K562 (cell line): ENCODE measurements at regions of chr6 and their contacts with region 1.

Region 1: DNA sequence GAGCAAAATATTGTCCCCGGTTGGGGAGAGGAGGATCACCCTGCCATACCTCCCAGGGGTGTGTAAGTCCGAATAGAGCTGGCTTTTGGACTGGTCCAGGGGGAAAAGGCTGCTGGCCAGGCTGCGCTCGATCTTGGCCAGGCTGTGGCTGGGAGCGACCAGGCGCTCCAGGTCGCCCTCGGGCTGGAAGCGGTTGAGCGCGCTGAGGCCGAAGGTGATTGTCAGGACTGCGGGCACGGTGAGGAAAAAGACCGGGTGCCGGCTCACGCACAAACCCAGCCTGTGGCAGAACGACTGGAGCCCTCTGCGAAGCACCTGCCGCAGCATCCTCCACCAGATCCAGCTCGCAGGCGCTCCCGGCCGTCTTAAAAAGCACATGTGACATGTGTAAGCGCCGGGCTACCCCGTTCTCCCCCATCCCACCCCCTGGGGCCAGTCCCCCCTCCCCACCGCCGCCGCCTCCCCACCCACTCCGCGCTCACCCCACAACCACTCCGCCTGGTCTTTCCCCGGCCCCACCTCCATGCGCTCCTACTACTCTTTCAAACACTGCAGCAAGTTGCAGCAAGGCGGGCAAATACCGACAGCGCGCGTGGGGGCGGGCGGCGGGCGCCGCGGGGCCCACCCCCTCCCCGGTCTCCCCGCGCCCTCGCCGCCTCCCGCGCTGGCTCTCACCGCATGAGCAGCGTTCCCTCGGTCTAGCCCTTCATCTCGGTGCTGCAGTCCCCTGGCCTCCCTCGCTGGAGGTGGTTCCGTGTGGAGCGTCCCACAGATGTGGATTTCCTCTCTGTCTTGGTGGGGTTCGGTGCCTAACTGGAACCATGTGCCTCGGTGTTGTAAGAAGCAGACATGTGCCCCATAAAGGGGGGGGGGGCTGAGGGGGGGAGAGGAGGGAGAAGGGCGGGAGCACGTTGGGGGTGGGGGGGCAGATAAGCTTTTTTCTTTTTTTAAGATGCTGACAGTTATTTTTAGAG is 42.4 kb downstream of the PTCHD4 start:
- DNase-seq: no peak
- ATAC-seq: no peak
- H3K4me3 ChIP-seq: no peak overlapping the region
- H3K27ac ChIP-seq: no peak overlapping the region
- H3K4me1 ChIP-seq: no peaks in the 10 kb centered on the region
- H3K27me3 ChIP-seq: no peaks in the 10 kb centered on the region
- CTCF ChIP-seq: no peak
- EP300 ChIP-seq: no peak
- POLR2A ChIP-seq: no peak
- RAD21 ChIP-seq: no peak

Region 2: DNA sequence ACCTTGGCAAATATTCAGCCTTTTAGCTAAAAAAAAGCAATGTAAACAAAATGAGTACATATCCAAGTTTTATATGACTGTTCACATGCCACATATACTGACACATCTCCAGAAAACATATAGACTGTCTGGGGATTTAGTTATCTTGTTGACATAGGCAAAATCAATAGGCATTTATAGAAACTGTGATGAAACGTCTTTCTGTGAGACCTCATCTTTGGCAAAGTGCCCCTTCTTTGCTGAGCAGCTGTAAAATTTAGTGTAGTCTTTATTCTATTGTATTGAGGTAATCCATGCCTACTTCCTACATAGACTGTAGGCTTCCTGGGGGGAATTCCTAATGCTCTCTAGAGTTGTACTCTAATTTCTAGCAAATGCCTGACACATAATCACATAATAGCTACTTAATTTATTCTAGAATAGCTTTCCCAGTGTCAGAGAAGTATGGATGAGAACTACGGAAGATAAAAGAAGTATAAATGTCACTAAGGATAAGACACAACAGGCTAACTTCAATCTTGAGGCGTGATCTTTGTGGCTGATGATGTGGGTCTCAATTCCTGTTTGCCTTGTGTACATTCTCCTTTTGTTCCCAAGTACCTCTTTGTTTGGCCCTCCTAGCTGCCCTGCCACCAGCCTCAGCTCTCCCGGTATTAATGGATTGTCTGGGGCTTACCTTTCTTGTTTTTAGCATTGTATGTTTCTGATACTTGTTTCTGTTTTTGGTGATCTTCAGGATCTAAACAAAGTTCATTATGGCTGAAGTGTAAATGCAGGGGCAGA is 11.9 kb after region 1 on chr6:
- CTCF ChIA-PET with region 1: no interaction called
- POLR2A ChIA-PET with region 1: no interaction called
- in situ Hi-C with region 1: no loop called
- intact Hi-C with region 1: no loop called
- DNase-seq: no peak
- ATAC-seq: no peak
- H3K4me3 ChIP-seq: no peak overlapping the region
- H3K27ac ChIP-seq: no peak overlapping the region
- H3K4me1 ChIP-seq: no peaks in the 10 kb centered on the region
- H3K27me3 ChIP-seq: no peaks in the 10 kb centered on the region
- CTCF ChIP-seq: no peak
- EP300 ChIP-seq: no peak
- POLR2A ChIP-seq: no peak
- RAD21 ChIP-seq: no peak

Region 3: GRCh38 chr6:48098923-48099322 is 30.4 kb after region 1 on chr6:
- CTCF ChIA-PET with region 1: no interaction called
- POLR2A ChIA-PET with region 1: no interaction called
- in situ Hi-C with region 1: no loop called
- intact Hi-C with region 1: loop called (anchors 2 kb)
- DNase-seq: no peak
- ATAC-seq: no peak
- H3K4me3 ChIP-seq: no peak overlapping the region
- H3K27ac ChIP-seq: no peak overlapping the region
- H3K4me1 ChIP-seq: no peaks in the 10 kb centered on the region
- H3K27me3 ChIP-seq: no peaks in the 10 kb centered on the region
- CTCF ChIP-seq: no peak
- EP300 ChIP-seq: no peak
- POLR2A ChIP-seq: no peak
- RAD21 ChIP-seq: no peak